Activated CD8-positive, alpha-beta T cell treated with anti-CD3 and anti-CD28 coated beads for 36 hours (primary cell): ENCODE measurements at regions of chr13 and their contacts with region 1.

Region 1: DNA sequence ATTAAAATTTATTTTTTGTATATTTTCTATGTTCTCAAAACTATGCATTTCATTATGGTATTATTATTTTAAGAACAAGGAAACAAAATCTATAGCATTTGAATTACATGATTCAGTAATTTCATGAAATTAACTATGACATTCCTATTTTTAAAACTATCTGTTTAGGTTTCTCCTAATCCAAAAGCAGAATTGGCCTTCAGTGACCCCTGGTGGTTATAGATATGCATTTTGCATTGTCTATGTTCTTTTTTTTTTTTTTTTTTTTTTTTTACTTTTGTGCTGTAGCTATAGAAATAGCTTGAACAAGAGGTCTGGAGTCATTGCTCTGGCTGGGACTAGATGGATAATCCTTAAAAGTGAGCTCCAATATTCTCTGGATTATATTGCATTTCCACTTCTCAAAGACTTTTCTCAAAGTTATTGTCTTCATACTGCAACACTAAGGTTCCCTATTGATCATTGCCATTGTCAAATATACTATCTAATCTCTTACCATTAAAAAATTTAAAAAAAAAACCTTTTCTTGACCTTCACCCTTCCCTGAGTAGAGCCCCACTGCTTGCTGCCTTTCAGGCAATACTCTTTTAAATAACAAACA is 15.9 kb upstream of the DNAJC3 start:
- DNase-seq: peak; percentile 26
- ATAC-seq: no peak
- H3K4me3 Mint-ChIP-seq: no peak overlapping the region
- H3K27ac Mint-ChIP-seq: no peak overlapping the region
- H3K4me1 Mint-ChIP-seq: no peaks in the 10 kb centered on the region
- H3K27me3 Mint-ChIP-seq: peaks cover 14% of the 10 kb centered on the region
- CTCF ChIP-seq: peak; percentile 76

Region 2: GRCh38 chr13:95536632-95537241 is 124.3 kb before region 1 on chr13:
- CTCF ChIA-PET with region 1: interaction called, 12 read pairs
- POLR2A ChIA-PET with region 1: no interaction called
- intact Hi-C with region 1: loop called (anchors 5 kb)
- DNase-seq: no peak
- ATAC-seq: no peak
- H3K4me3 Mint-ChIP-seq: no peak overlapping the region
- H3K27ac Mint-ChIP-seq: no peak overlapping the region
- H3K4me1 Mint-ChIP-seq: peaks cover 3% of the 10 kb centered on the region
- H3K27me3 Mint-ChIP-seq: peaks cover 23% of the 10 kb centered on the region
- CTCF ChIP-seq: peak; percentile 43

Region 3: GRCh38 chr13:95624020-95624419 is 37.1 kb before region 1 on chr13:
- CTCF ChIA-PET with region 1: interaction called, 32 read pairs
- POLR2A ChIA-PET with region 1: no interaction called
- intact Hi-C with region 1: loop called (anchors 1 kb)
- DNase-seq: peak; percentile 35
- ATAC-seq: peak; percentile 30
- H3K4me3 Mint-ChIP-seq: no peak overlapping the region
- H3K27ac Mint-ChIP-seq: no peak overlapping the region
- H3K4me1 Mint-ChIP-seq: no peaks in the 10 kb centered on the region
- H3K27me3 Mint-ChIP-seq: peaks cover 11% of the 10 kb centered on the region
- CTCF ChIP-seq: peak; percentile 75